ENCODE measurements at regions of chr16 and their contacts with region 1.

Region 1: GRCh38 chr16:74862741-74863244 is 88.2 kb upstream of the FA2H start:
- DNase-seq: peak; percentile 63 to 69
- ATAC-seq: peak; percentile 88 to 89
- H3K4me3 ChIP-seq: no peak overlapping the region
- H3K27ac ChIP-seq: no peak overlapping the region
- H3K4me1 ChIP-seq: no peaks in the 10 kb centered on the region
- CTCF ChIP-seq: peak; percentile 97
- EP300 ChIP-seq: no peak
- POLR2A ChIP-seq: no peak
- RAD21 ChIP-seq: peak; percentile 94 to 98

Region 2: GRCh38 chr16:74679983-74680382 is 182.8 kb before region 1 on chr16:
- CTCF ChIA-PET with region 1: interaction called, 13 read pairs
- POLR2A ChIA-PET with region 1: no interaction called
- DNase-seq: no peak
- ATAC-seq: no peak
- H3K4me3 ChIP-seq: no peak overlapping the region
- H3K27ac ChIP-seq: no peak overlapping the region
- H3K4me1 ChIP-seq: no peaks in the 10 kb centered on the region
- CTCF ChIP-seq: no peak
- EP300 ChIP-seq: no peak
- POLR2A ChIP-seq: no peak
- RAD21 ChIP-seq: no peak

Region 3: GRCh38 chr16:74726716-74727115 is 136.1 kb before region 1 on chr16:
- CTCF ChIA-PET with region 1: interaction called, 35 read pairs
- POLR2A ChIA-PET with region 1: no interaction called
- DNase-seq: peak in 1 of 2 experiments; percentile 72
- ATAC-seq: peak in 1 of 2 experiments; percentile 65; a peak in 3 of 6 replicates
- H3K4me3 ChIP-seq: no peak overlapping the region
- H3K27ac ChIP-seq: no peak overlapping the region
- H3K4me1 ChIP-seq: peaks cover 16% of the 10 kb centered on the region
- CTCF ChIP-seq: peak; percentile 45
- EP300 ChIP-seq: no peak
- POLR2A ChIP-seq: no peak
- RAD21 ChIP-seq: peak in 1 of 2 experiments; percentile 53; a peak in 2 of 5 replicates

Region 4: GRCh38 chr16:74785031-74785430 is 77.8 kb before region 1 on chr16:
- CTCF ChIA-PET with region 1: interaction called, 10 read pairs
- POLR2A ChIA-PET with region 1: no interaction called
- DNase-seq: no peak
- ATAC-seq: no peak
- H3K4me3 ChIP-seq: no peak overlapping the region
- H3K27ac ChIP-seq: no peak overlapping the region
- H3K4me1 ChIP-seq: no peaks in the 10 kb centered on the region
- CTCF ChIP-seq: no peak
- EP300 ChIP-seq: no peak
- POLR2A ChIP-seq: no peak
- RAD21 ChIP-seq: no peak

Region 5: GRCh38 chr16:74825941-74826542 is 36.8 kb before region 1 on chr16:
- CTCF ChIA-PET with region 1: interaction called, 161 read pairs
- POLR2A ChIA-PET with region 1: no interaction called
- DNase-seq: no peak
- ATAC-seq: no peak
- H3K4me3 ChIP-seq: no peak overlapping the region
- H3K27ac ChIP-seq: no peak overlapping the region
- H3K4me1 ChIP-seq: no peaks in the 10 kb centered on the region
- CTCF ChIP-seq: no peak
- EP300 ChIP-seq: no peak
- POLR2A ChIP-seq: no peak
- RAD21 ChIP-seq: no peak

Region 6: GRCh38 chr16:74874912-74875546 is 12.2 kb after region 1 on chr16:
- CTCF ChIA-PET with region 1: interaction called, 55 read pairs
- POLR2A ChIA-PET with region 1: no interaction called
- DNase-seq: no peak
- ATAC-seq: peak in 1 of 2 experiments; percentile 44; a peak in 3 of 6 replicates
- H3K4me3 ChIP-seq: no peak overlapping the region
- H3K27ac ChIP-seq: peak overlapping the region in 1 of 2 experiments; percentile 67; a peak in 3 of 6 replicates
- H3K4me1 ChIP-seq: peaks cover 5% of the 10 kb centered on the region; the same call in 2 of the 3 replicates
- CTCF ChIP-seq: no peak
- EP300 ChIP-seq: no peak
- POLR2A ChIP-seq: no peak
- RAD21 ChIP-seq: no peak

Measured in A549 (cell line).